ENCODE measurements at regions of chr10 and their contacts with region 1.

Region 1: DNA sequence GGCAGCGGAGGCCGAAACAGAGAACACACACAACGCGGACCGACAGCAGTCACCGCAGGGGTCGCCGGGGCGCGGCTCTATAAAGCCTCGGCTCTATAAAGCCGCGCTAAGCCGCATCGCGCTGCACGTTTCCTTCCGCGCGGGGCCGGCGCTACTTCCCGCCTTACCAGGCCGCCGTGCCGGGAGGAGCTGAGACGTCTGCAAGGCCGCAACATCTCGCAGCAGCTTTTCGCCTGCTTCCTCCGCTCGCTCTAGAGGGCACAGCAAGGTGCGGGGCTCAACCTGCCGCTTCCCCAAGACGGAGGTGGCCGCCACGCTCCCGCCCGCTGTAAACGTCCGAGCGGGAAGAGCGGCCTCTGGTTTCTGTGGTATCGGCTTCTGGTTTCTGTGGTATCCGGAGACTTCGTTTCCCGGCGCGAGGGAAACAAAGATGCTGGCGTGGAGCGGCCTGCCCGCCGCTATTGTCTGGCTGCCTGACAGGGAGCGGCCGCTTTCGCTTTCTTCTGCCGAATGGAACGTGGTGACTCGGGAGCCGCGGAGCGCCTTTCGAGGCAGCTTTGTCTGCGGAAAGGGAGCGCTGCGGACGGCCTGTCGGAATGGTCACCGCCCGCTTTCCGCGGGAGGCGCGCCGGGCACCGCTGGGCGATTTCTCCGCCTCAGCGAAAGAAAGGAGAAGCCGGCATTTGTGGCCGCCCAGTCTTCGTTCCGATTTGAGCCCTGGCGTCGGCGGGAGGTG is 91.8 kb downstream of the SPAG6 start:
- DNase-seq: peak; percentile 95 to 96
- ATAC-seq: peak; percentile 96
- H3K4me3 ChIP-seq: peak overlapping the region; percentile 78 to 81
- H3K27ac ChIP-seq: peak overlapping the region; percentile 68 to 85
- H3K4me1 ChIP-seq: no peaks in the 10 kb centered on the region
- H3K27me3 ChIP-seq: no peaks in the 10 kb centered on the region

Region 2: GRCh38 chr10:22228943-22229801 is 207.9 kb before region 1 on chr10:
- intact Hi-C with region 1: loop called in 1 of 2 experiments (anchors 5 kb)
- DNase-seq: peak; percentile 89 to 94
- ATAC-seq: peak; percentile 99
- H3K4me3 ChIP-seq: peak overlapping the region; percentile 70 to 90
- H3K27ac ChIP-seq: peak overlapping the region in 1 of 2 donors; percentile 70
- H3K4me1 ChIP-seq: no peaks in the 10 kb centered on the region
- H3K27me3 ChIP-seq: no peaks in the 10 kb centered on the region

Region 3: GRCh38 chr10:22251751-22252223 is 185.3 kb before region 1 on chr10:
- intact Hi-C with region 1: loop called in 1 of 2 experiments (anchors 10 kb)
- DNase-seq: peak; percentile 81 to 83
- ATAC-seq: peak; percentile 78
- H3K4me3 ChIP-seq: peak overlapping the region; percentile 65 to 80
- H3K27ac ChIP-seq: peak overlapping the region; percentile 92 to 93
- H3K4me1 ChIP-seq: no peaks in the 10 kb centered on the region
- H3K27me3 ChIP-seq: no peaks in the 10 kb centered on the region

Region 4: GRCh38 chr10:22316285-22317120 is 120.5 kb before region 1 on chr10 and contains the start of gene COMMD3:
- intact Hi-C with region 1: loop called in 1 of 2 experiments (anchors 5 kb)
- DNase-seq: peak; percentile 93 to 95
- ATAC-seq: peak; percentile 96
- H3K4me3 ChIP-seq: peak within 1 kb of the TSS; percentile 68 to 73
- H3K27ac ChIP-seq: peak within 1 kb of the TSS in 1 of 2 donors; percentile 60
- H3K4me1 ChIP-seq: no peaks in the 10 kb centered on the region
- H3K27me3 ChIP-seq: no peaks in the 10 kb centered on the region
- total RNA-seq, gene COMMD3: 38.9 to 43.7 TPM

Region 5: GRCh38 chr10:22714479-22715289 is 277.6 kb after region 1 on chr10 and contains the start of gene PIP4K2A:
- intact Hi-C with region 1: loop called in 1 of 2 experiments (anchors 10 kb)
- DNase-seq: peak; percentile 86 to 91
- ATAC-seq: peak; percentile 85
- H3K4me3 ChIP-seq: peak within 1 kb of the TSS; percentile 73 to 96
- H3K27ac ChIP-seq: peak within 1 kb of the TSS; percentile 52 to 91
- H3K4me1 ChIP-seq: peaks cover 0 to 3% of the 10 kb centered on the region in 2 donors
- H3K27me3 ChIP-seq: no peaks in the 10 kb centered on the region
- total RNA-seq, gene PIP4K2A: 77.9 to 90.3 TPM

Region 6: DNA sequence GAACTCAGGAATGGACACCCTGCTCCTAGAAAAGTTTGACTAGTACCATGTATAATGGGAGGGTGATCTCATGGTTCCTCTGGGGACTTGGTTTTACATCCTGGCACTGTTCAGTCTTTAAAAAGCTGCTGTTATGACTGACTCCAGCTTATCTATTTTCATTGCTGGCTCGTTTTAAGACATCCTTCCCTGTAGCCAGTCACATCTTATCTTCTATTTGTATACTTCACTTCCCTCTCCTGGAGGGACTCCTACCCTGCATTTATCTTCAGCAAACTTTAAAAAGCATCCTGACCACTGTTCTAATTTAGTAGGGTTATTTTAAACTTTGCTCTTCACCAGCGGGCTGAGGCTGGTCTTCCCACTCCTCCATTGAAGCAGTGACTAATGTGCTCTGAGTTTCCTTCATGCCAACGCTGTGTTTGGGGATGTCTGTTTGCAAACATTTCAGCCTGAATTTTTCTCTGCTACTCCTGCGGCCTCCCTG is 417.9 kb after region 1 on chr10:
- intact Hi-C with region 1: loop called in 1 of 2 experiments (anchors 10 kb)
- DNase-seq: no peak
- ATAC-seq: peak; percentile 71
- H3K4me3 ChIP-seq: no peak overlapping the region
- H3K27ac ChIP-seq: peak overlapping the region in 1 of 2 donors; percentile 24
- H3K4me1 ChIP-seq: peaks cover 0 to 2% of the 10 kb centered on the region in 2 donors
- H3K27me3 ChIP-seq: no peaks in the 10 kb centered on the region